Posterior vena cava (tissue), 2 donors: ENCODE measurements at regions of chrX and their contacts with region 1.

Region 1: DNA sequence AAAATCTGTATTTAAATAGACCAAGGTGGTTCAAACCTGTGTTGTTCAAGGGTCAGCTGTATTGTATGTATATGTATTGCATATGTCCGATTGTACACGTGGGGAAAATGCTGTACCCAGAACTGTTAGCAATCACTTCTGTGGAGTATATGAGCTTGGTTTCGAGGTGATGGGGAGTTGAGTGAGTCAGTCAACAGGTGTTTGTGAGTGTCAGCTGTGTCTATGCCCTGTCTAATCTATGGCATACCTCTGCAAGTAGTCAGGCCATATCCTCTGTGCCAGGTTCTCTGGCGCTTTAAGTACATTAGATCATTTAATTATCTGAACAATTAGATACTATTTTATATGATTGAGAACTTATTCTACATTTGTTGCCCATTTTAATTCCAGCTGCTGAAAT is 7.4 kb downstream of the ZRSR2 start:
- DNase-seq: no peak

Region 2: GRCh38 chrX:15813416-15813815 is 15.7 kb after region 1 on chrX:
- intact Hi-C with region 1: loop called in 1 of 2 experiments (anchors 2 kb)
- DNase-seq: no peak